T-cell (primary cell): ENCODE measurements at regions of chr7 and their contacts with region 1.

Region 1: GRCh38 chr7:97043281-97043680 is 18.6 kb upstream of the DLX5 start:
- DNase-seq: no peak
- ATAC-seq: no peak
- H3K4me3 ChIP-seq: no peak overlapping the region
- H3K4me3 Mint-ChIP-seq: no peak overlapping the region
- H3K27ac ChIP-seq: no peak overlapping the region
- H3K27ac Mint-ChIP-seq: no peak overlapping the region
- H3K4me1 ChIP-seq: no peaks in the 10 kb centered on the region
- H3K4me1 Mint-ChIP-seq: no peaks in the 10 kb centered on the region
- H3K27me3 ChIP-seq: no peaks in the 10 kb centered on the region
- H3K27me3 Mint-ChIP-seq: peaks cover 44 to 61% of the 10 kb centered on the region in 2 donors

Region 2: GRCh38 chr7:96982586-96982985 is 60.7 kb before region 1 on chr7:
- CTCF ChIA-PET with region 1: no interaction called
- POLR2A ChIA-PET with region 1: no interaction called
- DNase-seq: no peak
- ATAC-seq: no peak
- H3K4me3 ChIP-seq: no peak overlapping the region
- H3K4me3 Mint-ChIP-seq: no peak overlapping the region
- H3K27ac ChIP-seq: no peak overlapping the region
- H3K27ac Mint-ChIP-seq: no peak overlapping the region
- H3K4me1 ChIP-seq: no peaks in the 10 kb centered on the region
- H3K4me1 Mint-ChIP-seq: no peaks in the 10 kb centered on the region
- H3K27me3 ChIP-seq: peaks cover 9 to 12% of the 10 kb centered on the region in 2 experiments
- H3K27me3 Mint-ChIP-seq: peaks cover 33% of the 10 kb centered on the region in 2 donors

Region 3: DNA sequence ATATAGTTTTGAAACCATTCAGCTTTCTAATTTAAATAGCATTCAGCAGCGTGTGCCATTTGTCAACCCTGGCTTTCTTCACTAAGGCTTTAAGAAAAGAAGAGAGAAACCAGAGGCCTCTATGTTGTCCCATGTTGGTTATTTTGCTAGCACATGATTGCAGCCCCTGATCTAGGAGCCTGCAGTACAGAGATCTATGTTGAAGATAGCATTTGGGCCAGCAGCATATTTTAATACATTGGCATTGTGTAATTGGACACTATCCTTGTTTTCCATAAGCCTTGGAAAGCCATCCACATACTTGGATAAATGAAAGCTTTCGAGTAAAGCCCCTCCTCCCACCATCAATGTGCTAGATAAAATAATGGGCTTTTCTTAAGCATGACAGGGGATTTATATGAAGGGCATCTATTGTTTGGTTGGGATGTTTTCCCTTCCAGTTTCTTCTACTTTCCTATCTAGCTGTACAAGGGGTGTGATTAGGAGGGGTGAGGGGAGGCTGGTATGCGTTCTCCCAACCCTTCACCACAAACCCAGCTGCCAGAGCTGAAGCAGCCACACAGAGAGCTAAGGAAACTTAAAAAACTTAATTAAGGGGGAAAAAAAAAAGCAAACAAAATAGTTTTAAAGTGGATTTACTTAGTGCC is 51.1 kb after region 1 on chr7:
- CTCF ChIA-PET with region 1: interaction called in 1 of 2 experiments, 11 read pairs
- POLR2A ChIA-PET with region 1: no interaction called
- DNase-seq: no peak
- ATAC-seq: no peak
- H3K4me3 ChIP-seq: no peak overlapping the region
- H3K4me3 Mint-ChIP-seq: no peak overlapping the region
- H3K27ac ChIP-seq: no peak overlapping the region
- H3K27ac Mint-ChIP-seq: no peak overlapping the region
- H3K4me1 ChIP-seq: no peaks in the 10 kb centered on the region
- H3K4me1 Mint-ChIP-seq: no peaks in the 10 kb centered on the region
- H3K27me3 ChIP-seq: peaks cover 0 to 18% of the 10 kb centered on the region in 2 experiments
- H3K27me3 Mint-ChIP-seq: peaks cover 7 to 20% of the 10 kb centered on the region in 2 donors

Region 4: GRCh38 chr7:97418312-97418711 is 375.0 kb after region 1 on chr7:
- CTCF ChIA-PET with region 1: no interaction called
- POLR2A ChIA-PET with region 1: interaction called in 1 of 2 experiments, 10 read pairs
- DNase-seq: no peak
- ATAC-seq: no peak
- H3K4me3 ChIP-seq: no peak overlapping the region
- H3K4me3 Mint-ChIP-seq: no peak overlapping the region
- H3K27ac ChIP-seq: no peak overlapping the region
- H3K27ac Mint-ChIP-seq: no peak overlapping the region
- H3K4me1 ChIP-seq: no peaks in the 10 kb centered on the region
- H3K4me1 Mint-ChIP-seq: no peaks in the 10 kb centered on the region
- H3K27me3 ChIP-seq: no peaks in the 10 kb centered on the region
- H3K27me3 Mint-ChIP-seq: no peaks in the 10 kb centered on the region